PC-9 (cell line): ENCODE measurements at regions of chr7 and their contacts with region 1.

Region 1: GRCh38 chr7:106009403-106010226 is 46.6 kb downstream of the CDHR3 start:
- DNase-seq: peak; percentile 77 to 94
- H3K4me3 ChIP-seq: peak overlapping the region; percentile 4; the same call in 1 of the 2 replicates
- H3K27ac ChIP-seq: no peak overlapping the region
- H3K4me1 ChIP-seq: peaks cover 6% of the 10 kb centered on the region
- H3K27me3 ChIP-seq: no peaks in the 10 kb centered on the region
- CTCF ChIP-seq: peak; percentile 94

Region 2: DNA sequence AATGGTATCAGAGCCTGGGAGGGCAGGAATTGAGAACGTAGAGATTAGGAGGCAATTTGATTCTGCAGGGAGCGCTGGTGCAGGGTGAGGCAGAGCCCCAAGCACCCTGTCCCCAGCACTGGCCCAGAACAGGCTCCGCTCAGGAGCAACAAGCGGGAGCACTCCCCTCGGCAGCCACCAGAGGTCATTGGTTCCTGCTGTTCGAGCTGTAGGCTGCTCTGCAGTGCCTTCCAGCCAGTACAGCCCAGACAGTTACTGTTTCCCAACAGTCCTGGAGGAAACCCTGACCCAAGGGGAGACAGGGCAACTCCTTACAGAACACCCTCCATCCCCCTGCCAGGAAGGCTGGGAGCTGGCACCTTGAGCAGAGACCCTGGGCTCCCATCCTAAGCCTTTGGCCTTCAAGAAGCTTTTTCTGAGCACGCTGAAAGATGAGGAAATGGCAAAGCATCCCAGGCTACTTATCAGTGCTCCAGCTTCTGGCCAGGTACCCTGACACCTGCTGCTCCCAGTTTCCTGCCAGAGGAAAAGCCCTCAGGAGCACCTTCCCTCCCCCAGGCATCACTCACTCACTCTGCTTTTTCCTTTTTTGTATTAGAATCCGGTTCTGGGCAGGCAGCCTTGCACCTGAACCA is 357.1 kb before region 1 on chr7:
- CTCF ChIA-PET with region 1: no interaction called
- POLR2A ChIA-PET with region 1: interaction called, 4 read pairs
- intact Hi-C with region 1: loop called (anchors 1 kb)
- DNase-seq: peak; percentile 43 to 79
- H3K4me3 ChIP-seq: no peak overlapping the region
- H3K27ac ChIP-seq: no peak overlapping the region
- H3K4me1 ChIP-seq: peaks cover 47% of the 10 kb centered on the region
- H3K27me3 ChIP-seq: no peaks in the 10 kb centered on the region
- CTCF ChIP-seq: peak; percentile 87

Region 3: GRCh38 chr7:106143711-106144337 is 134.2 kb after region 1 on chr7:
- CTCF ChIA-PET with region 1: no interaction called
- POLR2A ChIA-PET with region 1: no interaction called
- intact Hi-C with region 1: no loop called
- DNase-seq: no peak
- H3K4me3 ChIP-seq: no peak overlapping the region
- H3K27ac ChIP-seq: no peak overlapping the region
- H3K4me1 ChIP-seq: no peaks in the 10 kb centered on the region
- H3K27me3 ChIP-seq: no peaks in the 10 kb centered on the region
- CTCF ChIP-seq: no peak